ENCODE measurements at regions of chr17 and their contacts with region 1.

Region 1: DNA sequence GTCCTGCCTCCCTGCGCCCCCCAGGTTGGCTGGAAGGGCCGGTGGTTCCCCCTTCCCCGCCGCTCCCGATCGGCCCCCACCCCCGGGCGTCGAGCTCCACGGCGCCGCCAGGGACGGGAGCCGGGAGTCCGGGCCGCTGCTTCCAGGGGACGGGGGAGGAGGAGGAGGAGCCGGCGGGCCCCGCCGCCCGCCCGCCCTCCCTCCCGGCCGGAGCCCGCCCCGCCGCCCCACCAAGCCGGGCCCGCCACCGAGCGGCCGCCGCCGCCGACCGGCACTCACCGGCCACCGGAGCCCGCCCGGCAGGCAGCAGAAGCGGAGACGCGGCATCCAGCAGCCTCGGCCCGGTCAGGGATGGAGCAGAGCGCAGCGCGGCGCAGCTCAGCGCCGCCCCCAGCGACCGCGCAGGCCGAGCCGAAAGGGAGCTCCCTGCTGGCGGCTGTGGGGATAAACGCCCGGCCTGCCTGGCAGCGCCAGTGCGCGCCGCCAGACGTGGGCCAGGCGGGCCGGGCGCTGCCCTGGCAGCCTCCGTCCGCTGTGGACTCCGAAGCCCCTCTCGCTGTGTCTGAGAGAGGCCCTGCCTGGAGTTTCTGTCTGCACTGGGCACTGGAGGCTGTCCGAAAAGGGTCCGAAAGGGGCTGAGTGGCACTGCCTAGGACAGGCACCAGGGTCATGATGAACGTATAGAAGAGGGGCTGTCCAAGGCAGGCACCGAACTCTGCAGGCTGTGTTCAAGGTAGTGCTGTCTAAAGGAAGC is at the start of gene MYO18A:
- DNase-seq: peak; percentile 85
- H3K4me3 Mint-ChIP-seq: peak within 1 kb of the TSS; percentile 55
- H3K27ac Mint-ChIP-seq: no peak within 1 kb of the TSS
- H3K4me1 Mint-ChIP-seq: peaks cover 33% of the 10 kb centered on the region
- H3K27me3 Mint-ChIP-seq: peaks cover 32% of the 10 kb centered on the region

Region 2: GRCh38 chr17:29124117-29124924 is 55.9 kb before region 1 on chr17:
- CTCF ChIA-PET with region 1: interaction called, 14 read pairs
- DNase-seq: peak; percentile 66
- H3K4me3 Mint-ChIP-seq: no peak overlapping the region
- H3K27ac Mint-ChIP-seq: no peak overlapping the region
- H3K4me1 Mint-ChIP-seq: peaks cover 3% of the 10 kb centered on the region
- H3K27me3 Mint-ChIP-seq: no peaks in the 10 kb centered on the region

Region 3: GRCh38 chr17:29140051-29140621 is 40.1 kb before region 1 on chr17:
- CTCF ChIA-PET with region 1: interaction called, 84 read pairs
- DNase-seq: peak; percentile 91
- H3K4me3 Mint-ChIP-seq: peak overlapping the region; percentile 77
- H3K27ac Mint-ChIP-seq: peak overlapping the region; percentile 93
- H3K4me1 Mint-ChIP-seq: peaks cover 73% of the 10 kb centered on the region
- H3K27me3 Mint-ChIP-seq: no peaks in the 10 kb centered on the region

Region 4: DNA sequence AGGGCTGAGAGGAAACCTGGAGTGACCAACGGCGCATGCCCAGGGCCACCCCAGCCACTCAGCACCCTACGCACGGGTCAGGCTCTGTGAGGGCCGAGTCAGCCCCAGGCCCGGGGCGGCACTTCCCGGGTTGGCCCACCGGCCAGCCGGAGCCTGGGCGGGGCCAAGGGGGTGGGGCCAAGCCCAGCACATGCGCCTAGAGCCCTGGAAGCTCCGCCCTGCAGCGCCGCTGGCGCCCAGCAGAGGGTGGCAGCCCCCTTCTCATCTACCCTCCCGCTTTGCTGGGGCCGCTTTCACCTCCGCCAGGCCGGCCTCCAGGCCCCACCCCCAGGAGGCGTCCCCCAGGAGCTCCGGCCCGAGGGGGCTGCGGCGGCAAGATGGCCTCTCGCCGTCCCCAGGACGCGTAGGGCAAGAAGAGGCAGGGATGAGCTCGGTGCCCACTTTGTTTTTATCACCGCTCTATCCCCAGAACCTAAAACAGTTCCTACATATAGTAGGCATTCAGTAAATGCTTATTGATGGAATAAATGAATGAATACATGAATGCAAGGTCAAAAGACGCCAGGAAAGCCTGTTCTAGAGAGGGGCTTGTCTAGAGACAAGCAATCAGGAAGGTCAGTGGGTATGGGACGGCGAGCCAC is 31.3 kb before region 1 on chr17:
- CTCF ChIA-PET with region 1: interaction called, 84 read pairs
- DNase-seq: peak; percentile 95
- H3K4me3 Mint-ChIP-seq: peak overlapping the region; percentile 66
- H3K27ac Mint-ChIP-seq: peak overlapping the region; percentile 76
- H3K4me1 Mint-ChIP-seq: peaks cover 56% of the 10 kb centered on the region
- H3K27me3 Mint-ChIP-seq: no peaks in the 10 kb centered on the region

Region 5: GRCh38 chr17:29155227-29155965 is 24.8 kb before region 1 on chr17:
- CTCF ChIA-PET with region 1: interaction called, 84 read pairs
- DNase-seq: peak; percentile 70
- H3K4me3 Mint-ChIP-seq: peak overlapping the region; percentile 15
- H3K27ac Mint-ChIP-seq: peak overlapping the region; percentile 85
- H3K4me1 Mint-ChIP-seq: peaks cover 47% of the 10 kb centered on the region
- H3K27me3 Mint-ChIP-seq: no peaks in the 10 kb centered on the region

Region 6: GRCh38 chr17:29219378-29220047 is 39.3 kb after region 1 on chr17:
- CTCF ChIA-PET with region 1: interaction called, 10 read pairs
- DNase-seq: peak; percentile 83
- H3K4me3 Mint-ChIP-seq: no peak overlapping the region
- H3K27ac Mint-ChIP-seq: no peak overlapping the region
- H3K4me1 Mint-ChIP-seq: peaks cover 7% of the 10 kb centered on the region
- H3K27me3 Mint-ChIP-seq: peaks cover 15% of the 10 kb centered on the region